Mammary epithelial cell (primary cell): ENCODE measurements at regions of chr10 and their contacts with region 1.

Region 1: DNA sequence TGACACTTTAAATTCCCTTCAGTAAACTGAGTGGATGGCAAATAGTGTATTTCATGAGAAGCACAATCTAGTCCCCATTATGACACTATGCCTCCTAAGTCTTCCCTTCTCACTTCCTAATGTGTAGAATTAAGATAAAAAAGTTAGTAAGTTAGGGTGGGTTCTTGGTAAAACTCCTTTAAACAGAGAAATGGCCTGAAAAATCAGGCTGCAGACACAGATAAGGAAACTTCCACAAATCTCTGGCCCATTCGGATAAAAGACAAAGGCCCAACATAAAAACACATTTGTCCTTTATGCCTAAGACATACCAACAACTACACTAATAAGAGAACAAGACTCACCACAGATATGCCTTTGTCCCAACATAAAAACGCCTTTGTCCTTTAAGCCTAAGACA is 21.5 kb downstream of the AKR1C8 start:
- DNase-seq: no peak
- H3K4me3 ChIP-seq: no peak overlapping the region
- H3K27ac ChIP-seq: no peak overlapping the region
- H3K4me1 ChIP-seq: no peaks in the 10 kb centered on the region
- H3K27me3 ChIP-seq: no peaks in the 10 kb centered on the region
- CTCF ChIP-seq: no peak

Region 2: GRCh38 chr10:5216801-5217200 is 53.3 kb after region 1 on chr10:
- CTCF ChIA-PET with region 1: no interaction called
- dilution Hi-C with region 1: loop called (anchors 5 kb)
- in situ Hi-C with region 1: no loop called
- intact Hi-C with region 1: no loop called
- DNase-seq: no peak
- H3K4me3 ChIP-seq: no peak overlapping the region
- H3K27ac ChIP-seq: no peak overlapping the region
- H3K4me1 ChIP-seq: no peaks in the 10 kb centered on the region
- H3K27me3 ChIP-seq: peaks cover 2% of the 10 kb centered on the region
- CTCF ChIP-seq: no peak

Region 3: DNA sequence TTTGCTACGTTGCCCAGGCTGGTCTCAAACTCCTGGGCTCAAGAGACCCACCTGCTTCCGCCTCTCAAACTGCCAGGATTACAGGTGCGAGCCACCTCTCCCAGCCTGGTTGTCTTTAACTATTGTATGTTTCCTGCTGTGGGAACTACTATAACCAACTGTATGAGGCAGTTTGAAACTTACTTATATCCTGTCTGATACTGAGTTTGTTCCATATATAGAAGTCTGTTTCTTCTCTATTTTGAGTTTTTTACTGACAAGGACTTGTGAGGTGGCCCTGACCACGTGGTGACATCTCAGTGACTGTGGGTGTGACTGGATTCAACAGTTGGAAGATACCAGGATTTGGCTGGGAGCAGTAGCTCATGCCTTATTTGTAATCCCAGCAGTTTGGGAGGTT is 740.7 kb after region 1 on chr10:
- CTCF ChIA-PET with region 1: no interaction called
- dilution Hi-C with region 1: no loop called
- in situ Hi-C with region 1: no loop called
- intact Hi-C with region 1: no loop called
- DNase-seq: no peak
- H3K4me3 ChIP-seq: no peak overlapping the region
- H3K27ac ChIP-seq: no peak overlapping the region
- H3K4me1 ChIP-seq: peaks cover 5% of the 10 kb centered on the region
- H3K27me3 ChIP-seq: no peaks in the 10 kb centered on the region
- CTCF ChIP-seq: no peak